PC-9 (cell line): ENCODE measurements at regions of chr17 and their contacts with region 1.

Region 1: DNA sequence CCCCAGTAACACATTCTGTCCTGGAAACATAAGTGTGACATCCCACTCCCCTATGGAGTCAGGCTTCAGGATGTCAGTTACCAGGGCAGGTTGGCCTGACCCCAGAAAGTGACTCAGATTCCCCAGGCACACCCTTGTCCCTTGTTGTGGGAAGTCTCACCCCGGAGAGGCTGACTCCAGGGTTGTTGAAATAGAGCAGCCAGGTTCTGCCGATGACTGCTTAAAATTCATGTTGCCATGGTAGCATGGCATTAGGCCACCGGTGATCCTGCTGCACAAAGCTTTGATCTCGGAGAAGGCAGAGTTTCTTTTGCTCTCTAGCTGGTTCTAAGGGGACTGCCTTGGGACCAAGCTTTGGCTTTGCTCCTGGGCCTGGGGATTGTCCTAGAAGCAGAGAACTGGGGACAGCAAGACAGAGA is 106.6 kb downstream of the RGS9 start:
- DNase-seq: peak; percentile 30 to 51
- H3K4me3 ChIP-seq: no peak overlapping the region
- H3K27ac ChIP-seq: no peak overlapping the region
- H3K4me1 ChIP-seq: no peaks in the 10 kb centered on the region
- H3K27me3 ChIP-seq: no peaks in the 10 kb centered on the region; the same call in 1 of the 2 replicates
- CTCF ChIP-seq: no peak

Region 2: DNA sequence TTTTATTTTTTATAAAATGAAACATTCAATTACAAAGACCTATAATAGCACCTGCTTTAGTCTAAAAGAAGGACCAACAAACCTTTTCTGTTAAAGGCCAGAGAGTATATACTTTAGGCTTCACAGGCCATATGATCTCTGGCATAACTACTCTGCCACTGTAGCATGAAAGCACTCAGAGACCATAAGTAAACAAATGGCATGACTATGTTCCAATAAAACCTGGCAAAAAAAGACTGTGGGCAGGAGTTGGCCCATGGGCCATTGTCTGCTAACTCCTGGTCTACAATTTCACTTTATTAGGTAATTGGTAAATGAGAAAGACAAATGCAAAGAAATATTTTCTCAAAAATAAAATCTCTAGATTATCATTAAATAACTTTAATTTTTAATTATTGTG is 933.2 kb after region 1 on chr17:
- CTCF ChIA-PET with region 1: no interaction called
- POLR2A ChIA-PET with region 1: interaction called, 17 read pairs
- intact Hi-C with region 1: no loop called
- DNase-seq: no peak
- H3K4me3 ChIP-seq: no peak overlapping the region
- H3K27ac ChIP-seq: no peak overlapping the region
- H3K4me1 ChIP-seq: no peaks in the 10 kb centered on the region
- H3K27me3 ChIP-seq: no peaks in the 10 kb centered on the region
- CTCF ChIP-seq: no peak